ENCODE measurements at regions of chr3 and their contacts with region 1.

Region 1: DNA sequence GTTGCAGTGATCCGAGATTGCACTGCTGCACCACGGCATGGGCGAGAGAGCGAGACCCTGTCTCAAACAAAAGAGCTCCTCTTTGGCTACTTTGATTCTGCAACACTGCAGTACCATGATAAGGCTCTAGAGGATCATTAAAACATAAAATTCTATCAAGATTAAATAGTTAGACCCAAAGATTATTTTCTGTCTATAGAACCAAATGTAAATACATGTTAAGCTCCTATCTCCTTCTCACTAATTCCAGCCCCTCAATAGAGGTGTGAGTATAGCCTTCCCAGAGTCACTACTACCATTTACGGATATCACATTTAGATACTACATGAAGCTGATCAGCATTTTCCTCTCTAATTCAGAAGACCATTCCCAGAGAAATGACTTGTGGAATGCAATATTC is 4.3 kb upstream of the MUC13 start:
- DNase-seq: no peak
- H3K27ac ChIP-seq: no peak overlapping the region
- CTCF ChIP-seq: no peak

Region 2: GRCh38 chr3:125507128-125507527 is 568.2 kb after region 1 on chr3:
- CTCF ChIA-PET with region 1: no interaction called
- POLR2A ChIA-PET with region 1: interaction called, 10 read pairs
- DNase-seq: no peak
- H3K27ac ChIP-seq: no peak overlapping the region
- CTCF ChIP-seq: no peak